ENCODE measurements at regions of chr11 and their contacts with region 1.

Region 1: GRCh38 chr11:113305440-113306336 is 8.7 kb upstream of the TTC12 start:
- DNase-seq: peak; percentile 91

Region 2: GRCh38 chr11:113261709-113262475 is 43.8 kb before region 1 on chr11:
- intact Hi-C with region 1: no loop called
- DNase-seq: no peak

Region 3: GRCh38 chr11:113377681-113378412 is 72.2 kb after region 1 on chr11:
- intact Hi-C with region 1: loop called in 1 of 2 experiments (anchors 2 kb)
- DNase-seq: no peak

Region 4: DNA sequence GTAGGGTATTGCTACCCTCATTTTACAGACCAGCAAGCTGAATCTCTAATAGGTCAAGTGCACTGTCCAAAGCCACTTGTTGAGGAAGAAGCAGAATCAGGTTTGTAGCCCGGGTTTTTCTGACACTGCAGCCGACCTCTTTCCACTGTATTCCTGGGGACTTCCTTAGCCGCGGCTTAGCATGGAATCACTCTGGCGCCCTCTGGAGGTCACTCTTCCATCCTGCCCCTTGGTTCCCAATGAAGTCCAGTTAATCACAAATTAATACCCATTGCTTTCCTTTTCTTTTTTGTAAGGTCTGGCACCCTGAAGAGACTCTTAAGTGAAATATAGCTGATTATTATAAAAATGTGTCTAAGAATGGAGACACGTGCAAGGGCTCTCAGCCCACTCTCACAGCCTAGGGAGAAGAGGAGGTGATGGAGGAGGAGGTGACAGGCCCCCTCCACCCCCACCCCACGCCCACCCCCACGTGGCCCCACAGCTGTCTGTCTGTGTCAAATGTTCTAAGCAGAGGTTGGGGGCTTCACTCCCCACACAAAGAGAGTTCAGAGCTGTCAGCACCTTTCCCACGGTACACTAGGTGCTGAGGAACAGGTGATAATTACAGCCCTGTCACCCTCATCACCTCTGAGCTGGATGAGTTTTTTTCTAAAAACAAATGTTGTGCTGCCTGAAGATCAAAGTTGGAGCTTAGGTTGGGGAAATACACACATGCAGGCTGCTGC is 227.2 kb after region 1 on chr11:
- intact Hi-C with region 1: loop called (anchors 5 to 10 kb)
- DNase-seq: peak; percentile 89

Region 5: GRCh38 chr11:113730887-113731726 is 425.4 kb after region 1 on chr11:
- intact Hi-C with region 1: loop called (anchors 2 to 5 kb)
- DNase-seq: no peak